OCI-LY7 (cell line): ENCODE measurements at regions of chr3 and their contacts with region 1.

Region 1: GRCh38 chr3:183591881-183592521 is 36.5 kb upstream of the KLHL6 start:
- DNase-seq: peak; percentile 95
- H3K4me3 ChIP-seq: peak overlapping the region; percentile 57
- H3K27ac ChIP-seq: peak overlapping the region; percentile 98
- H3K4me1 ChIP-seq: peaks cover 84% of the 10 kb centered on the region
- CTCF ChIP-seq: peak; percentile 90

Region 2: GRCh38 chr3:183295238-183295637 is 296.8 kb before region 1 on chr3:
- CTCF ChIA-PET with region 1: no interaction called
- POLR2A ChIA-PET with region 1: no interaction called
- intact Hi-C with region 1: no loop called
- DNase-seq: no peak
- H3K4me3 ChIP-seq: no peak overlapping the region
- H3K27ac ChIP-seq: no peak overlapping the region
- H3K4me1 ChIP-seq: no peaks in the 10 kb centered on the region
- CTCF ChIP-seq: no peak

Region 3: DNA sequence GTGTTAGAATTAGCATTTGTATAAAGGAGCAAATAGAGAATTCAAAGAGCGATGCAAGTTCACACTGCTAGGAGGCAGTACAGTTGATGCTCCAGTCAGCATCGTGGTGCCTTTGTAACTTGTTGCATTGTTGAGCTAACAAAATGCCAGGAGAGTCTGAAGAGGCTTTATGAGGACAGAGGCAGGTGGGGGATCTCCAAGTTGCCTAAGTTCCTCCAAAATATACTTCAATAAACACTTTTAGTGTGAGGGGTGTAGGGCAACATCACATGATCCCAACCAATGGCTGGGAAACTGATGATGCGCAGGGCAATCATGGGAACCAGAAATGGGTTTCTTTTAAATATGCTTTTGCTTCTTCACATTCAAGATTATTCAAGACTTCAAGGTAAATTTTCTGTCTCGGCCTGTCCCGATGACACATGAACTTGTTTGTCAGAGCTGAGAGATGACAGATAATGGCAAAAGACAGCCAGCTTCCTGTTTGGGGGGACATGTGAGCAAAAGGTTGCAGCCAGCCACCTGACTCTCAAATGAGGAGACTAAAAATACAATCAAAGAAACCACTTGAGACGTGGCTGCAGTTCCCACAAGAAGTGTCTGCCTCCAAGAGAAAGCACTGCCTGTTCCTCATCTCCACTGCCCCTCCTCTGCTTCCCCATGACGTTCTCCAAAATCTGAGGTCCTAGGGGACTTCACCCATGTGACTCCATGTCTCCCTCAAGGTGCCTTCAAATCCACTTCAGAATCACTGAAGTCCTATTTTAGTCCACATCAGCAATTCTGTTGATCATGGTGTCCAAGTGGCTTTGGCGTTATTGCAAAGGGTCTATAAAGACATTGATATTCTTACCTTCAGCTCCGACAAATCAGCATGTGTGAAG is 75.8 kb before region 1 on chr3:
- CTCF ChIA-PET with region 1: interaction called, 3 read pairs
- POLR2A ChIA-PET with region 1: interaction called, 5 read pairs
- intact Hi-C with region 1: loop called (anchors 1 kb)
- DNase-seq: peak; percentile 93
- H3K4me3 ChIP-seq: peak overlapping the region; percentile 51
- H3K27ac ChIP-seq: peak overlapping the region; percentile 94
- H3K4me1 ChIP-seq: peaks cover 99% of the 10 kb centered on the region
- CTCF ChIP-seq: peak; percentile 84

Region 4: DNA sequence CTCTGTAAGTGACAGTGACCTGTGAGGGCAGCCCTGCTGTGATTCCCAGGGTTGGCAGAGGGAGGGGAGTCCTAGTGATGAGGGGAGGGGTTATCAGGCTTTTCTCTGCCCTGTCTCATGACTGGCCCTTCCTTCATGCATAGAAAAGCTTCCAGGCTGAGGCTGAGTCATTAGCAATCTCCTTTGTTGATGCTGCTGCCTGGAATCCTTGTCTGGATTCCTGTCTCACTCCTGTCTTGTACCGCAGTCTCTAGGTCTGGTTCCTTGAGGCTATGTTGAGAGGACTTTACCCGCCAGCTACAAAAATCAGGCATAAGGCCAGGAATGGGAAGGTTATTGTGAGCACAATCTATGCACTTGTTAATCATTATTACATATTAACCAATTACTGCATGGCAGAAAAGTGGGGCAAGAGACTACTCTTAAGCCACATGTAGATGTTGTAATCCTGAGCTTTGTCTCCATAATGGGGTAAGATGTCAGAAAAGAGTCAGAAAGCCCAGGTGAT is 43.7 kb before region 1 on chr3:
- CTCF ChIA-PET with region 1: no interaction called
- POLR2A ChIA-PET with region 1: interaction called, 39 read pairs
- intact Hi-C with region 1: loop called (anchors 1 kb)
- DNase-seq: no peak
- H3K4me3 ChIP-seq: peak overlapping the region; percentile 97
- H3K27ac ChIP-seq: peak overlapping the region; percentile 96
- H3K4me1 ChIP-seq: peaks cover 82% of the 10 kb centered on the region
- CTCF ChIP-seq: no peak

Region 5: DNA sequence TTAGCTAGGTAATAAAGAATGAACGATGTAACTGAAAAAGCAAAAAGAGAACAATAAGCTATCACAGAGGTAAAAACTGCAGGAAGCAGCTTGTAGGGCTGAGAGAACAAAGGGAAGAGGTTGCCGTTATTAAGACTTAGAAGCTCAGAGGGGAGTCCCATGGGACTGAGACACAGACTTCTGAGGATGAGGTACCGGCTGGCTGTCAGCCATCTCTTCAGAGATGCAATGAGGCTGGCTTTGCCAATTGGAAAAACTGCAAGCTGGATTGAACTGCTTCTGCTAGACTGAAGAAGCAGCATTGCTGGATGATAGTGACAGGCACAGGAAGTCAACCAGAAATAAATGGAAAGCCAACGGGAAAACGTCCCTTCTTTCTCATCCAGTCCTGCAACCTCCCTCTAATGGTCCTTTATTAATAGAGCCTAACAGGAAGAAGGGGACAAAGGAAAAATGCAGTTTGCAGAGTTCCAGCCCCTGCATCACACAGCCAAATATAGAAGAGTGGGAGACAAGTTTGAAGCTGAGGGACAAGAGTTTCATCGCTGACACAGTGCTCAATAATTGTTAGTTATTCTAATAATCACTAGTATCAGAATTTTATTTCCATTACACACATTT is 15.4 kb before region 1 on chr3:
- CTCF ChIA-PET with region 1: interaction called, 50 read pairs
- POLR2A ChIA-PET with region 1: interaction called, 265 read pairs
- intact Hi-C with region 1: loop called (anchors 2 kb)
- DNase-seq: peak; percentile 97
- H3K4me3 ChIP-seq: peak overlapping the region; percentile 47
- H3K27ac ChIP-seq: peak overlapping the region; percentile 94
- H3K4me1 ChIP-seq: peaks cover 96% of the 10 kb centered on the region
- CTCF ChIP-seq: no peak

Region 6: DNA sequence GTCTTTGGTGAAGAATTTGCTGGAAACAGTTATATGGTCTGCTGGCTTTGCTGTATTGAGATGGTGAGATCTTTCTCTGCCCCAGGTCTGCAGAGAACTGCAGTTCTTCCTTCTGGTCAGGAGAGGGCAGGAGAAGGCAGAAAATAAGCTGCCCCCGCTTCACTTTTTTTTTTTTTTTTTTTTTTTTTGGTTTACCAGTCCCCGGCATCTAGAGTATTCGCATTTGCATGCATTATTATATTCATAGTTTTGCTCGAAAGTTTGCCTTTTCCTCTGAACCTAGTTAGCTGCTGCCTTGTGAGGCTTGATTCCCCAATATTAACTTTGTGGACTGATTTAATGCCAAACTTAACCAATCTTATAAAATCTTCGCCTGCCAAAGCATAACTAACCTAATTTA is 303.3 kb after region 1 on chr3:
- CTCF ChIA-PET with region 1: no interaction called
- POLR2A ChIA-PET with region 1: no interaction called
- intact Hi-C with region 1: no loop called
- DNase-seq: peak; percentile 72
- H3K4me3 ChIP-seq: no peak overlapping the region
- H3K27ac ChIP-seq: no peak overlapping the region
- H3K4me1 ChIP-seq: peaks cover 5% of the 10 kb centered on the region
- CTCF ChIP-seq: peak; percentile 92